Endothelial cell of umbilical vein (primary cell): ENCODE measurements at regions of chr3 and their contacts with region 1.

Region 1: DNA sequence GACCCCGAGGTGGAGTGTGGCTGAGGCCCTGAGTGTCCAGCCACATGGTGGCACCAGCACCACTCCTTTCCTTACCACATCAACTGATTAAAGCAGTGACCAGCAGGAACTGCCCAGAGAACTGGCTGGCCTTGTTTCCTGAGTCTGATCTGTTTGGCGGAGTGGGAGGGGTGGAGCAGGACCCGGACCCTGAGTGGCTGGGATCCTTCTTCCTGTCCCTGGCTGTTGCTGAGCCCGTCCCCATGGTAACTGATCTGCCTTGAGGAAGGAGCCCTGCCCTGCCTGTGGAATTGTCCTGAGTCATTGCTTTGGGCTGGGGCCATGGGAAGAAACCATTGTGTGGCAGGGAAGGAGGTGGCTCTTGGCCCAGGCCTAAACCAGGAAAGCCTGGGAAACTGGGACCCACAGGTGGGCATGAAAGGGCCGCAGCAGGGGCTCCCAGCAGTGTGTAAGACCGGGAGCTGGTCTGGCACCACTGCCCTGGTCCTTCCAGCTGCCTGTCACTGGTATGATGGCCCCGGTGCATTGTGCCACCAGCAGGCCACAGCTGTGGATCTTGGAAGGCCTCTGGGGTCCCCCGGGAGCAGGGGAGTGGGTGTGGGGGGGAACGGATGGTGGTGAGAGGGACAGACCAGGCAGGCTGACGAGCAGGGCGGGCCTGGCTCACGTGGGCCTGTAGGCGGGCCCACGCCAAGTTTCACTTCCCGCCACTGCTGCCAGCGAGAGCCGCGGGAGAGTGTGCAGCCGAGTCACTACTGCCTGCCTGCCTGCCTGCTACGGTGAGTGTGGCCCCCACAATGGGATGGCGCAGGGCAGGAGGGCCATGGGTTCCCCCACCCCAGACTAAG is 19.2 kb downstream of the ATRIP start:
- DNase-seq: peak; percentile 100
- H3K4me3 ChIP-seq: peak overlapping the region in 2 of 3 experiments; percentile 44 to 45
- H3K27ac ChIP-seq: peak overlapping the region; percentile 98
- H3K4me1 ChIP-seq: peaks cover 24% of the 10 kb centered on the region
- H3K27me3 ChIP-seq: no peaks in the 10 kb centered on the region
- CTCF ChIP-seq: peak; percentile 81 to 82
- POLR2A ChIP-seq: peak; percentile 92

Region 2: DNA sequence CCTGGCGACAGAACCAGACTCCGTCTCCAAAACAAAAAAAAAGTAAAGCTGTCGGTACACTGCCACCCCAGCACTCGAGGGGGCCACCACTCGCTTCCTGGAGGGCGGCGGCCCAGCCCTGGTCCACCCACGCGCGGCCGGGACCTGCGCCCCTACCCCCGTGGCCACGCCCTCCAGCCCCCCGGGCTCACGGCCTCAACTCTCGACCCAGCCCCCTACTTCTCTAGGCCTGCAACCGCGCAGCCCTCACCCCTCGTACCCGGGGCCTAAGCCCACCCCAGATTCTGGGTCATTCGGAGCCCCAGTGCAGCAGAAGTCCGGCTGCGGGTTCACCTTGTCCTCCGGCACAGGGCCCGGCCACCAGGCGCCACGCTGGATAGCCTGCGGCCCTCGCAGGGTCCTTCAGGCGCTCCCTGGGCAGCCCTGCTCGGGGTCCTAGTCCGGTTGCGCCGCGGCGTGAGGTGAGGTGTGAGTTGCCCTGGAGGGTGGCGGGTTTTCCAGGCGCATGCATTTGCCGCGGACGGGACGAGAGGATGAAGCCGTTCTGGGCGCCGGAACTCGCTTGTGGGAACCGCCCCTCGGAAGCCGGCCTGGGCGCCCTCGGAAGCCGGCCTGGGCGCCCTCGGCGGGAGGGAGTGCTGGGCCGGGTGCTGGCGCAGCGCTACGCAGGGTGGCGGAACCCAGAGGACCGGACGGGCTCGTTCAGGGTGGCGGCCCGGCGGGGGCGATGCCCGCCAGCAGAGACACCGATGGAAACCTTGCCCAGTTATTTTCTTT is 164.5 kb before region 1 on chr3:
- CTCF ChIA-PET with region 1: no interaction called
- POLR2A ChIA-PET with region 1: no interaction called
- dilution Hi-C with region 1: no loop called
- intact Hi-C with region 1: no loop called
- DNase-seq: peak; percentile 88
- H3K4me3 ChIP-seq: peak within 1 kb of the TSS; percentile 57 to 86 (median 65)
- H3K27ac ChIP-seq: peak within 1 kb of the TSS; percentile 51
- H3K4me1 ChIP-seq: peaks cover 8% of the 10 kb centered on the region
- H3K27me3 ChIP-seq: peaks cover 2 to 5% of the 10 kb centered on the region in 2 experiments
- CTCF ChIP-seq: no peak
- POLR2A ChIP-seq: no peak

Region 3: DNA sequence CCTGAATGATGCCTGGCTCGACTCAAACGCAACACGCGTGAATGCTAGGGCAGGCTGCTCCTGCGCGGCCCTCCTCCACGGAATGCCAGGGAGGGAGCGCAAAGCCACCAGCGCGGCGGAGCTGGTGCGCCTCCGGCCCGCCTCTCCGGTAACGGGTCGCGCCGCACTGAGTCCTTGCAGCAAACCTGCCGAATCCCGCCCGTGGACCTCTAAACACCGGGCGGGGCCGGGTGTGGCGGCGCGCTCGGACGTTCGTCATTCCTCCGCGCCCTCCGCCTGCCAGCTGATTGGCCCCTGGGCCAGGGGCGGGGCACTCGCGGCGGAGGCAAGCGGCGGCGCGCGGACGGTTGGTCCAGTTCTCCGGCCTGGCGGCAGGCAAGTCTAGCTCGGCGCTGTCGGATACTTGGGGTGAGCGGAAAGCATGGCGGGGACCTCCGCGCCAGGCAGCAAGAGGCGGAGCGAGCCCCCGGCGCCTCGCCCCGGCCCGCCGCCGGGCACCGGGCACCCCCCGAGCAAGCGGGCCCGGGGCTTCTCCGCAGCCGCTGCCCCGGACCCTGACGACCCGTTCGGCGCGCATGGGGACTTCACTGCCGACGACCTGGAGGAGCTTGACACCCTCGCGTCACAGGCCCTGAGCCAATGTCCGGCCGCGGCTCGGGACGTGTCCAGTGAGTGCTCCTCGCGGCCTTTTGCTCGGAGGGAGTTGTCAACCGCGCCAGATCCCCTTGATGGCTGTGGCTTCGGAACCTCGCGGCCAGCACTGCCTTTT is 19.1 kb before region 1 on chr3 and contains the start of gene ATRIP:
- CTCF ChIA-PET with region 1: no interaction called
- POLR2A ChIA-PET with region 1: no interaction called
- dilution Hi-C with region 1: no loop called
- intact Hi-C with region 1: loop called (anchors 2 kb)
- DNase-seq: peak; percentile 91
- H3K4me3 ChIP-seq: peak within 1 kb of the TSS; percentile 70 to 92 (median 73)
- H3K27ac ChIP-seq: peak within 1 kb of the TSS; percentile 65
- H3K4me1 ChIP-seq: peaks cover 15% of the 10 kb centered on the region
- H3K27me3 ChIP-seq: no peaks in the 10 kb centered on the region
- CTCF ChIP-seq: no peak
- POLR2A ChIP-seq: peak; percentile 98
- total RNA-seq, gene ATRIP: 12.6 and 14.7 TPM in 2 replicates

Region 4: GRCh38 chr3:48507351-48508061 is 41.8 kb after region 1 on chr3:
- CTCF ChIA-PET with region 1: interaction called, 7 read pairs
- POLR2A ChIA-PET with region 1: no interaction called
- dilution Hi-C with region 1: no loop called
- intact Hi-C with region 1: loop called (anchors 1 kb)
- DNase-seq: peak; percentile 72
- H3K4me3 ChIP-seq: no peak overlapping the region
- H3K27ac ChIP-seq: no peak overlapping the region
- H3K4me1 ChIP-seq: peaks cover 21% of the 10 kb centered on the region
- H3K27me3 ChIP-seq: no peaks in the 10 kb centered on the region
- CTCF ChIP-seq: peak; percentile 41 to 74
- POLR2A ChIP-seq: no peak

Region 5: GRCh38 chr3:48556793-48557626 is 91.3 kb after region 1 on chr3 and contains the start of gene PFKFB4:
- CTCF ChIA-PET with region 1: interaction called, 14 read pairs
- POLR2A ChIA-PET with region 1: no interaction called
- dilution Hi-C with region 1: no loop called
- intact Hi-C with region 1: loop called (anchors 1 kb)
- DNase-seq: peak; percentile 99
- H3K4me3 ChIP-seq: peak within 1 kb of the TSS; percentile 43 to 63 (median 53)
- H3K27ac ChIP-seq: no peak within 1 kb of the TSS
- H3K4me1 ChIP-seq: peaks cover 12% of the 10 kb centered on the region
- H3K27me3 ChIP-seq: no peaks in the 10 kb centered on the region
- CTCF ChIP-seq: no peak
- POLR2A ChIP-seq: peak; percentile 24
- total RNA-seq, gene PFKFB4: 4.2 and 4.9 TPM in 2 replicates

Region 6: GRCh38 chr3:48609088-48610005 is 143.6 kb after region 1 on chr3 and contains the start of gene UQCRC1:
- CTCF ChIA-PET with region 1: no interaction called
- POLR2A ChIA-PET with region 1: no interaction called
- dilution Hi-C with region 1: no loop called
- intact Hi-C with region 1: loop called (anchors 2 kb)
- DNase-seq: peak; percentile 96
- H3K4me3 ChIP-seq: peak within 1 kb of the TSS; percentile 52 to 85 (median 73)
- H3K27ac ChIP-seq: peak within 1 kb of the TSS; percentile 9
- H3K4me1 ChIP-seq: peaks cover 13% of the 10 kb centered on the region
- H3K27me3 ChIP-seq: no peaks in the 10 kb centered on the region
- CTCF ChIP-seq: peak; percentile 52 to 84
- POLR2A ChIP-seq: peak; percentile 96
- total RNA-seq, gene UQCRC1: 184 and 186 TPM in 2 replicates

Region 7: DNA sequence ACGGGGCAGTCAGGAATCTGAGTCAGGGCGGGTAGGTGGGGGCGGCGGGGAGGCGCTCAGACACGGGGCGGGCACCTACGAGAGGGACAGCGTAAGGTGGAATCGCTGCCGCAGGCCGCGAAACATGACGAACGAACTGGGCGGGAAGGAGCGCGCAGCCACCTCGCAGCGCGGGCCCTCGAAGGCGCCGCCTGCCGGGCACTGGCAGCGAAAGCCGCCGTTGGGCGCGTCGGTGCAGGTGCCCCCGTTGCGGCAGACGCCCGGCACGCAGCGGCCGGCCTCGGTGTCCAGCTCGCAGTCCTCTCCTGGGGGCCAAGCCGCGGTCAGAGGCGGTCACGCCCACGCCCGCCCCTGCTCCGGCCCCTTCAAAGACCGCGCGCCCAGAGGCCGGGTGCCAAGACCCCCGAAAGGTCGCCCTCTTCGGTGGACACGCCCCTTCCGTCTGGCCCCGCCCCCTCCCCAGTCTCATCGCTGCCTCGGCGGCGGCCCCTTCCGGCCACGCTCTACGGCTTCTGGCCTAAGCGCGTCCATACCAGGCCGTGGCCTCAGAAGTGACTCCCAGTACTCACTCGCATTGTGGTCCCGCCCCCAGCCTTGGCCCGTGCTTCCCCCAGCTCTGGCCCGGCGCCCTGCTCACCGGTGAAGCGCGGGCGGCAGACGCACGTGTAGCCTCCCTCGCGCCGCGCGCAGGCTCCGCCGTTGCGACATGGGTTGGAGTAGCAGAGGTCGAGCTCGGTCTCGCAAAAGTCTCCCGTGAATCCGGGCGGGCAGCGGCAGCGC is 190.5 kb after region 1 on chr3:
- CTCF ChIA-PET with region 1: no interaction called
- POLR2A ChIA-PET with region 1: no interaction called
- dilution Hi-C with region 1: no loop called
- intact Hi-C with region 1: loop called (anchors 1 kb)
- DNase-seq: peak; percentile 73
- H3K4me3 ChIP-seq: peak overlapping the region; percentile 8 to 46 (median 18)
- H3K27ac ChIP-seq: no peak overlapping the region
- H3K4me1 ChIP-seq: peaks cover 7% of the 10 kb centered on the region
- H3K27me3 ChIP-seq: no peaks in the 10 kb centered on the region
- CTCF ChIP-seq: peak; percentile 75 to 85
- POLR2A ChIP-seq: no peak

Region 8: DNA sequence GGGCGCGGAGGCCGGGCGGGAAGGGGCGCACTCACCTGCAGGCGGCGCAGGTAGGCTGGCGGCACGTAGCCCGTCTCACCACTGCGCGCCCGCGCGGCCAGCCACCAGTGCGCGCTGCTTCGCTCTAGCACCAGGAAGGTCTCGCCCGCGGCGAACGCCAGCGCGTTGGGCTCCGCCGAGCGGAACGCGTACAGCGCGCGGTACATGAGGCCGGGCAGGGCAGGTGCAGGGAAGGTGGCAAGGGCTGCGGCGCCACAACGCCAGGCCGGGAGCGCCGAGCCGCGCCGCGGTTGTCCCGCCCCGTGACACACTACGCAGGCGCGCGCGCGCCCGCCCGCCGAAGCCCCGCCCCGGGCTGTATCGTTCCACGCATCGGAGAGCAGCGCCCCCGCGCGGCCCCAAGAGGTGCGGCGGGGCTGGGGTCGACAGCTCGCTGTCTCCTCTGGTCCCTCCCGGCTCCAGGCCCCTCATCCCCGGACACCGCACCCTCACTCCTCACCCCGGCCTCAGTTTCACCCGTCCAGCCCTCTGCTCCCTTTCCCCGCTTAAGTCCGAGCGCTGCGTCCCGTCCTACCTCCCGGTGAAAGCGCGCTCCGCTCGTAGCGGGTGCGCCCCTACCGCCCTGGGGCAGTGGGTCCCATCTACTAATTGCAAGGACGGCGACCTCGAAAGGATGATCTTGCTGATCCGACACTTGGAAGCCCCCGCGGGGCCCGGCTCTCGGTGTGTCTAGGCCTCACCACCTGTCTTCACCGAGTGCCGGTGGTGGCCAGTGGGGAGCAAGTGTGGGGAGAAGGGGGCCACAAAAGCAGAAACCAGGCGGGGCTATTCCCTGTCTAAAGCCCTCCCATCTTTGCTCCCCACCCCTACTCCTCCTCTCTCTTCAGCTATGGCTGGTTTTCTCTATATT is 220.1 kb after region 1 on chr3 and contains the start of gene NCKIPSD:
- CTCF ChIA-PET with region 1: interaction called, 4 read pairs
- POLR2A ChIA-PET with region 1: no interaction called
- dilution Hi-C with region 1: no loop called
- intact Hi-C with region 1: loop called (anchors 1 kb)
- DNase-seq: peak; percentile 84
- H3K4me3 ChIP-seq: peak within 1 kb of the TSS; percentile 6 to 90 (median 42)
- H3K27ac ChIP-seq: no peak within 1 kb of the TSS
- H3K4me1 ChIP-seq: peaks cover 14% of the 10 kb centered on the region
- H3K27me3 ChIP-seq: no peaks in the 10 kb centered on the region
- CTCF ChIP-seq: peak; percentile 88 to 90
- POLR2A ChIP-seq: peak; percentile 95
- total RNA-seq, gene NCKIPSD: 12.8 and 13.4 TPM in 2 replicates

Region 9: GRCh38 chr3:48747015-48747615 is 281.4 kb after region 1 on chr3:
- CTCF ChIA-PET with region 1: no interaction called
- POLR2A ChIA-PET with region 1: no interaction called
- dilution Hi-C with region 1: no loop called
- intact Hi-C with region 1: no loop called
- DNase-seq: peak; percentile 16
- H3K4me3 ChIP-seq: no peak overlapping the region
- H3K27ac ChIP-seq: no peak overlapping the region
- H3K4me1 ChIP-seq: no peaks in the 10 kb centered on the region
- H3K27me3 ChIP-seq: no peaks in the 10 kb centered on the region
- CTCF ChIP-seq: no peak
- POLR2A ChIP-seq: no peak